CD4-positive, alpha-beta memory T cell (primary cell): ENCODE measurements at regions of chr10 and their contacts with region 1.

Region 1: DNA sequence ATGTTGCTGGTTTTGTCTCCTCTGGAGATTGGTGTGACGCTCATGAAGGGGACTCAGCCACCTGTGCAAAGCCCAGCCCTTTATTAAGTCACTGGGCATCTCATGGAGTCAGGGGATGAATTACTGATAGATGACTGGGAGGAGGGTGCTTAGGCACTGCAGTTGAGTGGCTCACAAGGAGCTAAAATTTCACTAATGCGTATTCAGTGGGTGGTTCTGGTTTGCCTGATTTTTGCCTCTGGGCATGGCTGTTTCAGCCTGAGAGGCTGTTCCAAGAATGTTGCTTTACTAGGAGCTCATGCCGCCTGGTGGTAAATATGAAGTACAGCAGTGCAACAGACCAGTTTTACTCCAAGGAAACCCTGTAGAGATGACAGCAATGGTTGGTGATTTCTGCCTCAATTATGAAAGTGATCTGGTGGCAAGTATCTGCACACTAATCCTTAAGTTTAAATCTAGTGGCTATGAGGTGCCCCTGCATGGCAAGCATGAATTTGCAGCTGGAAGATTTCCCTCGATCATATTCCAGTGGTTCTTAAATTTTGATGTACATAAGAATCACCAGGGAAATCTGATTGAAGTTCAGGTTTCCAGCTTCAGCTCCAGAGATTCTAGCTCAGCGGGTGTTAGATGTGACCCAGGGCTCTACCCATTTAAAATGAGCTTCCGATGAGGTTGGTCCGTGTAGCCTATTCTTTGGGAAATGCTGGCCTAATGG is 19.9 kb downstream of the ACTA2 start:
- DNase-seq: peak; percentile 48 to 59 (median 55)
- H3K4me3 ChIP-seq: no peak overlapping the region
- H3K4me3 Mint-ChIP-seq: no peak overlapping the region
- H3K27ac ChIP-seq: no peak overlapping the region
- H3K27ac Mint-ChIP-seq: peak overlapping the region in 5 of 7 donors; percentile 13 to 76 (median 60)
- H3K4me1 ChIP-seq: peaks cover 15% of the 10 kb centered on the region
- H3K4me1 Mint-ChIP-seq: peaks cover 13 to 22% (median 15%) of the 10 kb centered on the region in 4 donors
- H3K27me3 ChIP-seq: no peaks in the 10 kb centered on the region
- H3K27me3 Mint-ChIP-seq: no peaks in the 10 kb centered on the region

Region 2: GRCh38 chr10:88828310-88828709 is 104.4 kb before region 1 on chr10:
- CTCF ChIA-PET with region 1: interaction called, 507 read pairs
- POLR2A ChIA-PET with region 1: interaction called, 7 read pairs
- intact Hi-C with region 1: no loop called
- DNase-seq: no peak
- H3K4me3 ChIP-seq: no peak overlapping the region
- H3K4me3 Mint-ChIP-seq: no peak overlapping the region
- H3K27ac ChIP-seq: no peak overlapping the region
- H3K27ac Mint-ChIP-seq: no peak overlapping the region
- H3K4me1 ChIP-seq: peaks cover 67% of the 10 kb centered on the region
- H3K4me1 Mint-ChIP-seq: peaks cover 46 to 80% (median 67%) of the 10 kb centered on the region in 4 donors
- H3K27me3 ChIP-seq: no peaks in the 10 kb centered on the region
- H3K27me3 Mint-ChIP-seq: no peaks in the 10 kb centered on the region

Region 3: DNA sequence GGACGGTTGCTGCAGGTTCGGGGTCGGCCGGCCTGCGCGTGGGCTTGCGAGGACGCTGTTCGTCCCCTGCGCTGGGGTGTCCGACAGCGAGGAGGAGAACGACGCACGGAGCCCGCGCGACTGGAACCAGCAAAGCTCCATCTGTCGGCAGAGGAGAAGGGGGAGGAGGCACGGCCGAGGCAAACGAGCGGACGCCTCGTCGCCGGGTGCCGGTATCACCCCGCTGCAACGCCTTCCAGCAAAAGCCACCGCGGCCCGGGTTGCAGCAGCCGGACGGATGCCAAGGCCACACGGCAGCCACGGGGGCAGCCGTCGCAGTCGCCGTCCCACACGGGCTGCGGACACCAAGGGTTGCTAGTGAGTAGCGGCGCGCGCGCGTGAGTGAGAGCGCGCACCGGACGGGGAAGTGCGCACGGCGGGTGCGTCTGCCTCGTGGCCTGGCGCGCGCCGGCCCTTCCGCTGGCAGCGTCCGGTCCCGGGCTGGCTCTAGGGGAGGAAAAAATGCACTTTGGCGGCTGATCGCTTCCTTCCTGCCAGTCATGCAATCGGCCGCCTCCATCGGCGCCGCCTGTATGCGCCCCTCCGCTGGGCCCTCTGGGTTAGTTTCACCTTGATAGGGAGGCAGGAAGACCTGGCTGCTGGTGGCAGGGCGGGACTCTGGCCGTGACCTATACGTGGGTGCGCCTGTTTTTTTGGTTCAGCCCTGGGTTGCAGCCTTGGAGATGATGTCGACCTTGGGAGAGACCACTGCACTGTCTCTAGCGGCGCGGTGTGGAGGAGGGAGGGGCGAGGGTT is 52.2 kb before region 1 on chr10:
- CTCF ChIA-PET with region 1: interaction called, 30 read pairs
- POLR2A ChIA-PET with region 1: interaction called, 9 read pairs
- intact Hi-C with region 1: loop called (anchors 1 kb)
- DNase-seq: peak; percentile 74 to 81 (median 78)
- H3K4me3 ChIP-seq: peak overlapping the region; percentile 70 to 71
- H3K4me3 Mint-ChIP-seq: peak overlapping the region; percentile 98 to 99 (median 99)
- H3K27ac ChIP-seq: peak overlapping the region; percentile 70
- H3K27ac Mint-ChIP-seq: peak overlapping the region; percentile 91 to 98 (median 96)
- H3K4me1 ChIP-seq: peaks cover 61% of the 10 kb centered on the region
- H3K4me1 Mint-ChIP-seq: peaks cover 48 to 78% (median 57%) of the 10 kb centered on the region in 4 donors
- H3K27me3 ChIP-seq: no peaks in the 10 kb centered on the region
- H3K27me3 Mint-ChIP-seq: no peaks in the 10 kb centered on the region

Region 4: DNA sequence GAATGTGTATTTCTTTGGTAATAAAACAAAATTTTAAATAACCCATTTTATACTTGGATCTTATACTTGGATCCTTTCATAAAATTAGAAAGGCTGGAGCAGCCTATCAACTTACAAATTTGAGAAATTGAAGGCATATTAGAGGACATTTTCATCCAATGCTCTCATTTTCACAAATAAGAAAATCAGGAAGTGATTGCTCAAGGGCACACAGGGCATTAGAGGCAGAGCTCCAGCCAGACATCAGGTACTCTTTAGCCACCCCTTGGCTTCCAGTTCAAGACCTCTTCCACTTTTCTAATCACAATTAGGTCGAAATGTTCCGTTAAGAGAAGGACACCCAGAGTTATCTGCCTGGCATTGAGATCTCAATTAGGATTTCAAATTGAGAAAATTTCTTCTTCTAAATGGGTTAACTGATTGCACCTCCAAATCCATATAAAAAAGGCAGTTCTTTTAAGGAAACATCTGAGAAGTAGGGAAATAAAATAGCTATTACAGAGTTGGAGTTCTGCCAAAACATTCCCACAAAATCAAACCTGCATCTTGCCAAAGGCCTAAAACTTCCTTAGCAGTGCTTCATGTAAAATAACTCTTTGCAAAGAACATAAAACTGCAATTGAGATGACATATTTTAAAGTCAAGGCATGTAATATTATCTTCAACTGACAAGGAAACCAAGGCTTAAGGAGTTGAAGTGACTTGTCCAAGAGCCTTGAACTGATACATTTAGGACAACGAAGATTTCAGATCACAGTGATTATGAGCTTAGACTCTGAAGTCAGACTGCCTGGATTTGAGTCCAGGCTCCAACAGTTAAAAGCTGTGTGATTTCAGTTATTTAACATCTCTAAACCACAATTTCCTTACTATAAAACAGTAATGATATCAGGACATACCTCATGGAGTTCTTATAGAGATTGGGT is 17.5 kb after region 1 on chr10:
- CTCF ChIA-PET with region 1: interaction called, 36 read pairs
- POLR2A ChIA-PET with region 1: interaction called, 3 read pairs
- intact Hi-C with region 1: no loop called
- DNase-seq: no peak
- H3K4me3 ChIP-seq: no peak overlapping the region
- H3K4me3 Mint-ChIP-seq: no peak overlapping the region
- H3K27ac ChIP-seq: no peak overlapping the region
- H3K27ac Mint-ChIP-seq: no peak overlapping the region
- H3K4me1 ChIP-seq: no peaks in the 10 kb centered on the region
- H3K4me1 Mint-ChIP-seq: peaks cover 0 to 16% (median 3%) of the 10 kb centered on the region in 4 donors
- H3K27me3 ChIP-seq: no peaks in the 10 kb centered on the region
- H3K27me3 Mint-ChIP-seq: no peaks in the 10 kb centered on the region

Region 5: DNA sequence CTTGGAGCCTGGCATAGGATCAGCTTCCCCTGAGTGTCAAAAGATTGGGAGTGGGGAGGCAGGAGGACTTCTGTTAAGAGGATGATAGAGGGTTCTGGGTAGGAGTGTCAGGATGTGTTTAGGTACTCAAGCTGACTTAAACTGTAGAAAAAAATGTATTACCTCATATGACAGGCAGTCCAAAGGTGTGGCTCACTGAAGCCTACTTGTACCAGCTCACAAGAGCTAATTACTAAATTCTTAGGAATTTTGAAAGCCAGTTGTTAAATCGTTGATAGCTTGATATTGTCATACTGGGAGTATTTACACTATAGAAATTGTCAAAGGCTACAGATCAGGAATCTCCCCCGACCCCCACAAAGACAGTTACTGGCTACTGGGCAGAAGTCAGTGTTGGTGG is 90.0 kb after region 1 on chr10:
- CTCF ChIA-PET with region 1: interaction called, 32 read pairs
- POLR2A ChIA-PET with region 1: no interaction called
- intact Hi-C with region 1: no loop called
- DNase-seq: no peak
- H3K4me3 ChIP-seq: no peak overlapping the region
- H3K4me3 Mint-ChIP-seq: no peak overlapping the region
- H3K27ac ChIP-seq: no peak overlapping the region
- H3K27ac Mint-ChIP-seq: peak overlapping the region in 1 of 7 donors; percentile 77
- H3K4me1 ChIP-seq: no peaks in the 10 kb centered on the region
- H3K4me1 Mint-ChIP-seq: peaks cover 0 to 8% (median 4%) of the 10 kb centered on the region in 4 donors
- H3K27me3 ChIP-seq: no peaks in the 10 kb centered on the region
- H3K27me3 Mint-ChIP-seq: no peaks in the 10 kb centered on the region

Region 6: GRCh38 chr10:89207181-89207800 is 274.6 kb after region 1 on chr10 and contains the start of gene CH25H:
- CTCF ChIA-PET with region 1: interaction called, 42 read pairs
- POLR2A ChIA-PET with region 1: no interaction called
- intact Hi-C with region 1: no loop called
- DNase-seq: peak; percentile 31 to 59 (median 41)
- H3K4me3 ChIP-seq: peak within 1 kb of the TSS; percentile 43 to 55
- H3K4me3 Mint-ChIP-seq: peak within 1 kb of the TSS; percentile 84 to 95 (median 87)
- H3K27ac ChIP-seq: no peak within 1 kb of the TSS
- H3K27ac Mint-ChIP-seq: peak within 1 kb of the TSS; percentile 6 to 83 (median 71)
- H3K4me1 ChIP-seq: peaks cover 17% of the 10 kb centered on the region
- H3K4me1 Mint-ChIP-seq: peaks cover 9 to 15% (median 13%) of the 10 kb centered on the region in 4 donors
- H3K27me3 ChIP-seq: peaks cover 6% of the 10 kb centered on the region
- H3K27me3 Mint-ChIP-seq: peaks cover 18 to 23% of the 10 kb centered on the region in 2 donors
- total RNA-seq, gene CH25H: not detected